Aorta (tissue), 5 donors: ENCODE measurements at regions of chr4 and their contacts with region 1.

Region 1: GRCh38 chr4:164467493-164467892 is 286.4 kb upstream of the SMIM31 start:
- DNase-seq: no peak
- ATAC-seq: no peak
- H3K4me3 ChIP-seq: no peak overlapping the region
- H3K27ac ChIP-seq: no peak overlapping the region
- H3K4me1 ChIP-seq: no peaks in the 10 kb centered on the region
- H3K27me3 ChIP-seq: no peaks in the 10 kb centered on the region

Region 2: GRCh38 chr4:164252286-164252685 is 215.2 kb before region 1 on chr4:
- intact Hi-C with region 1: no loop called
- DNase-seq: no peak
- ATAC-seq: no peak
- H3K4me3 ChIP-seq: no peak overlapping the region
- H3K27ac ChIP-seq: no peak overlapping the region
- H3K4me1 ChIP-seq: no peaks in the 10 kb centered on the region
- H3K27me3 ChIP-seq: no peaks in the 10 kb centered on the region

Region 3: DNA sequence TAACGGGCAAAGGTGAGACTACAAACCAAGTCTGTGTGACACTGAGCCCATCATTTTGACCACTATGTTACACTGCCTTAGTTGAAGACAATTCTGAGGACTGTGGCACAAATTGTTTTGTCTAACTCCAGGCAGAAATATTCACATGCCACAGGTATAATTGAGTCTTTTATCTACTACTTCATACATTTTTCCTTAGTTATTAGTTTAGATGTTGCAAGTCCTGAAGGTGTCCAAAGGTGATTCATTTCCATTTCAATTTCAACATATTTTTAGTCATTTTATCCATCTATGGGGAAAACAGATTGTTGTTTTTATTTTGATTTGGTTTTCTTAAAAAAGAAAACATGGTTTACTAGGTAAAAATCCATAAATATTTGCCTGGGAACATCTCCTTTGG is 55.2 kb before region 1 on chr4:
- intact Hi-C with region 1: loop called in 1 of 2 experiments (anchors 5 kb)
- DNase-seq: no peak
- ATAC-seq: no peak
- H3K4me3 ChIP-seq: no peak overlapping the region
- H3K27ac ChIP-seq: no peak overlapping the region
- H3K4me1 ChIP-seq: no peaks in the 10 kb centered on the region
- H3K27me3 ChIP-seq: no peaks in the 10 kb centered on the region